A673 (cell line): ENCODE measurements at regions of chr9 and their contacts with region 1.

Region 1: GRCh38 chr9:97781902-97782301 is 71.1 kb upstream of the FOXE1 start:
- DNase-seq: no peak
- H3K4me3 ChIP-seq: no peak overlapping the region
- H3K27ac ChIP-seq: no peak overlapping the region
- H3K4me1 ChIP-seq: no peaks in the 10 kb centered on the region
- H3K27me3 ChIP-seq: peaks cover 8% of the 10 kb centered on the region
- CTCF ChIP-seq: no peak

Region 2: DNA sequence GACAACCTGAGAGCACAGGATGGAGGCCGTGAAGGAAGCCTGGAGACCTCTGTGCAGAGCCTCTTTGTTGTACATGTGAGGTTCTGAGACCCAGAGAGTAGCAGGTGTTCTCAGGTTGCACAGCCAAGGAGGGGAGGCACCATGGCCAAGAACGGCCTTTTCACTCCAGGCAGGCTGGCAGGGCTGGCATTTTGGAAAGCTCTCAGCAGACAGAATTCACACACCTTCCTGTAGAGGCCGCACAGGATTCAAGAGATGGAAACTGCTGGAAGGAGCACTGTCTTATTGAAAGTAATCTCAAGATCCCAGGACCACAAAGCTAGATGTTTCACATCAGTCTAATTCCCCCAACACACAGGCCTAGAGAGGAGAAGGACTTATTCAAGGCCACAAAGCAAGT is 32.0 kb before region 1 on chr9:
- CTCF ChIA-PET with region 1: no interaction called
- POLR2A ChIA-PET with region 1: no interaction called
- intact Hi-C with region 1: loop called (anchors 2 kb)
- DNase-seq: no peak
- H3K4me3 ChIP-seq: no peak overlapping the region
- H3K27ac ChIP-seq: no peak overlapping the region
- H3K4me1 ChIP-seq: no peaks in the 10 kb centered on the region
- H3K27me3 ChIP-seq: peaks cover 28% of the 10 kb centered on the region
- CTCF ChIP-seq: no peak

Region 3: DNA sequence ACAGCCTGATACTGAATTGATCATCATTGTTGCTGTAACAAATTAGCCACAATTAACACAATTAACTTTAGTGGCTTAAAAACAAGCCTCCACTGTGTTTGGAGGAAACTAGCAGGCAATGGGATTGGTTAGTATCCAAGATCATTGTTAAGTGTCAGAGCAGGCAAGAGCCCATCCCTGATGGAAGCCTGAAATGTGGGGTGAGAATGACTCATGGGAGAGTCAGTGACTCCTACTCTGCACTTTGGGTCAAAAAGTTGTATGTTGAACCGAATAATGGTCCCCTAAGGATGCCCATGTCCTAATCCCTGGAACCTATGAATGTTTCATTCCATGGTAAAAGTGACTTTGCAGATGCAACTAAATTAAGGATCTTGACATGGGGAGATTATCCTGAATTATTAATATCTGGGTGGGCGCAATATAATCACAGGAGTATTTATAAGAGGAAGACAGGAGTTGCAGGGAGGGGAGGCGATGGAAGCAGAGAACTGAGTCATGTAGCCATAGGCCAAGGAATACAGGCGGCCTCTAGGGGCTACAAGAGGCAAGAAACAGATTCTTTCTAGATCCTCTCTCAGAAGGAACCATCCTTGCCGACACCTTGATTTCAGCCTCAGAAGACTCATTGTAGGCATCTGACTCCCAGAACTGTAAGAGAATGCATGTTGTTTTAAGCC is 1411.0 kb after region 1 on chr9:
- CTCF ChIA-PET with region 1: no interaction called
- POLR2A ChIA-PET with region 1: no interaction called
- intact Hi-C with region 1: no loop called
- DNase-seq: peak; percentile 35
- H3K4me3 ChIP-seq: no peak overlapping the region
- H3K27ac ChIP-seq: no peak overlapping the region
- H3K4me1 ChIP-seq: peaks cover 2% of the 10 kb centered on the region
- H3K27me3 ChIP-seq: no peaks in the 10 kb centered on the region
- CTCF ChIP-seq: peak; percentile 44